Left ventricle myocardium inferior (tissue), 1 donor: ENCODE measurements at regions of chr13 and their contacts with region 1.

Region 1: DNA sequence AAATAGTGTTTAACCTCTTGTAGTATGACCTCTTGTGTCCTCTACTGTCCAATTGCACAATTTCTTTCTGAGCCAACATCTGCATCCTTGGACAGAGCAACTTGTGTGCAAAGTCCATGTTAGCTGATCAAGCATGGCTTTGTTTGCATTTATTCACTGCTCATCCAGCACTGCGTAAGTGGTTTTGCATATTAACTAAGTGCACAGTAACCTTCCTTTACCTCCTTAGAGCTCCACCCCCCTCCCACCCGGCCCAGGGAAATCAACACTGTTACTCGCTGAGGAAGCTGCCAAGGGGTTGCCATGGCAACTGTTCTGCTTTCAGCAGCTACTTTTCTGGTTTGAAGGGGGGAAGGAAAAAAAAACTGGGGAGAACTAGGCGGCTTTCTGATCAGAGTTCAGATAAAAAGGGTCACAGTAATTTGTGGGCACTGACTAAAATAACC is 153.5 kb upstream of the KLF12 start:
- DNase-seq: peak; percentile 71
- H3K4me3 ChIP-seq: peak overlapping the region; percentile 54
- H3K27ac ChIP-seq: no peak overlapping the region
- H3K4me1 ChIP-seq: peaks cover 30% of the 10 kb centered on the region
- H3K27me3 ChIP-seq: no peaks in the 10 kb centered on the region
- CTCF ChIP-seq: no peak

Region 2: GRCh38 chr13:73835138-73835721 is 452.5 kb before region 1 on chr13:
- intact Hi-C with region 1: loop called (anchors 10 kb)
- DNase-seq: no peak
- H3K4me3 ChIP-seq: no peak overlapping the region
- H3K27ac ChIP-seq: no peak overlapping the region
- H3K4me1 ChIP-seq: peaks cover 22% of the 10 kb centered on the region
- H3K27me3 ChIP-seq: no peaks in the 10 kb centered on the region
- CTCF ChIP-seq: peak; percentile 80

Region 3: DNA sequence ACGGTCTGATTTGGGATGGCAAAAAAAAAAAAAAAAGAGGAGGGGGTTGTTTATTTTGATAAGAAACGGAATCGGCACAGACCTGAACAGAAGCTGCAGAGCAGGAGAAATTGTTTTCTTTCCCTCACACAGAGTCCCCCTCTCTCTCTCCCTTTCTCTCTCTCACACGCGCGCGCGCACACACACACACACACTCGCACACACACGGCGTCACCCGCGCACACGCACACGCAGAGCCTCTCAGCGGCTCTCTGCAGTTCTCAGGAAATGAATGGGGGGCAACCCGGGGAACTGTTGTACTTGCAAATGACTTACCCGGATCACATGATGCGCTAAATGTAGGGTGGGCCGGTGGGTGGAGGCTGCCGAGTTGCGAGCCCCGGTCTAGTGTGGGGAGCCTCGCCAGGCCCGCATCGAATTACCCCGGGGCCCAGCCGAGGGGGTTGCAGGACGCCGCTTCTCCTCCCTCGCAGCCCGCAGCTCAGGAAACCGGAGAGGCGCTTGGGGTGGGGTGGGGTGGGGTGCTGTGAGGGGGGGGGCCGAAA is 154.0 kb before region 1 on chr13:
- intact Hi-C with region 1: no loop called
- DNase-seq: peak; percentile 88
- H3K4me3 ChIP-seq: peak overlapping the region; percentile 95
- H3K27ac ChIP-seq: peak overlapping the region; percentile 99
- H3K4me1 ChIP-seq: peaks cover 68% of the 10 kb centered on the region
- H3K27me3 ChIP-seq: no peaks in the 10 kb centered on the region
- CTCF ChIP-seq: no peak